B cell (primary cell): ENCODE measurements at regions of chr6 and their contacts with region 1.

Region 1: DNA sequence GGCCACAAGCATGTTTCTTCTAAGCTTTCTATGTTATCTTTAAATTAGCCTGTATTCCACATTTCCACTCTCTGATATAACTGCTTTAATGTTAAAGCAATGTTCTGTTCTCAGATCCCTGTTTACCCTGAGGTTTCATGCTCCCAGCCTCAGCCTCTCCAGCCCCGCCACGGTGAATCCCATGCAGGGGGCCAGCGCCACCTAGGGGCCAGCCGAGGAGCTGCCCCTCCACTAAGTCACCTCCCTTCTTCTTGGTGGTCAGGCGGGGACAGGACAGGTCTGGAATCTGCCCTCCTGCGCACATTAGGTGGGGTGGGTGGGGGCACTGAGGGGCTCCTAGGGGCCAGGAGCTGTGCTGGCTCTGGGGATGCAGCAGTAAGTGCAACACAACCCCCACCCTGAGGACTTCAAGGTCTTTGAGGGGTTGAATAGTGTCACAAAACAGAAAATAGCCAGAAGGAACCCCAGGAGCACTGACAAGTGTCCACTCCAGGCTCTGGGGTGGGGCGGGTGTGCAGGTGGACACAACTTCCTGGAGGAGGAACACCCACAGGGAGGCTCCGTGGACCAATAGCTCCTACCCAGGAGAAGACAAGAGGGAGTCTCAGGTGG is 61.6 kb downstream of the RAB44 start:
- DNase-seq: peak; percentile 88
- ATAC-seq: peak; percentile 55
- H3K4me3 ChIP-seq: no peak overlapping the region
- H3K4me3 Mint-ChIP-seq: peak overlapping the region; percentile 66
- H3K27ac ChIP-seq: peak overlapping the region; percentile 32 to 95
- H3K27ac Mint-ChIP-seq: peak overlapping the region; percentile 85
- H3K4me1 ChIP-seq: peaks cover 48 to 61% of the 10 kb centered on the region in 2 donors
- H3K4me1 Mint-ChIP-seq: peaks cover 56% of the 10 kb centered on the region
- H3K27me3 ChIP-seq: no peaks in the 10 kb centered on the region
- H3K27me3 Mint-ChIP-seq: no peaks in the 10 kb centered on the region
- CTCF ChIP-seq: peak; percentile 96

Region 2: DNA sequence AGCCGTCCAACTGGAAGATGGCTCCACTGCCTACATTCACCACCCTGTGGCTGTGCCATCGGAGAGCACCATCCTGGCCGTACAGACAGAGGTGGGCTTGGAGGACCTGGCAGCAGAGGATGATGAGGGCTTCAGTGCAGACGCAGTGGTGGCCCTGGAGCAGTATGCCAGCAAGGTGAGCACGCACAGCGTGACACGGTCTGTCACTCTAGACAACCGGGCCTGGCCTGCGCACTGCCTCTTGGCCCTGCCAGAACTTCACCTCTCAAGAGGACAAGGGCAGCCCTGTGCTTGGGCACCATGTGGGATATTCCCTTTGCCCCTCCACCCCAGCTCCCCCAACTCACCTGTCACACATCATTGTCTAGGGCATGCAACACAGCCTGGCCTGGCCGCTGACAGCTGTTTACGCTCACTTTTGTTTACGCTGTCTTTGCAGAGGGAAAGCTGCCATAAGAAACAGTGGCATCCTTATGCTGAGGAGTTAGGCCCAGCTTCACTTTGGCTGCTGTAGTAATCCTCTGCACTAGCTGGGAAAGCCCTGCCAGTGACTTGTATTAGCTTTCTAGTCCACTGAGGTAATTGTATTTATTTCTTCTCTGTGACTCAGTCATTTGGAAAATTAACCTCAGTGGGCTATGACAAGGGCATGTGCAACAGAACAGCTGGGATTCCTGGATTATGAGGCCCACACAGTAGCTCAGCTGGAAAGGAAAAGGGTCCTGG is 1471.4 kb before region 1 on chr6:
- CTCF ChIA-PET with region 1: no interaction called
- POLR2A ChIA-PET with region 1: no interaction called
- intact Hi-C with region 1: no loop called
- DNase-seq: no peak
- ATAC-seq: no peak
- H3K4me3 ChIP-seq: no peak overlapping the region
- H3K4me3 Mint-ChIP-seq: no peak overlapping the region
- H3K27ac ChIP-seq: no peak overlapping the region
- H3K27ac Mint-ChIP-seq: no peak overlapping the region
- H3K4me1 ChIP-seq: peaks cover 4 to 10% of the 10 kb centered on the region in 2 donors
- H3K4me1 Mint-ChIP-seq: peaks cover 9% of the 10 kb centered on the region
- H3K27me3 ChIP-seq: no peaks in the 10 kb centered on the region
- H3K27me3 Mint-ChIP-seq: no peaks in the 10 kb centered on the region
- CTCF ChIP-seq: no peak

Region 3: GRCh38 chr6:36423101-36423824 is 336.0 kb before region 1 on chr6:
- CTCF ChIA-PET with region 1: interaction called, 29 read pairs
- POLR2A ChIA-PET with region 1: no interaction called
- intact Hi-C with region 1: loop called (anchors 1 kb)
- DNase-seq: peak; percentile 98
- ATAC-seq: peak; percentile 96
- H3K4me3 ChIP-seq: peak overlapping the region; percentile 68 to 81 (median 76)
- H3K4me3 Mint-ChIP-seq: peak overlapping the region; percentile 97
- H3K27ac ChIP-seq: peak overlapping the region; percentile 57 to 68
- H3K27ac Mint-ChIP-seq: peak overlapping the region; percentile 94
- H3K4me1 ChIP-seq: peaks cover 9 to 14% of the 10 kb centered on the region in 2 donors
- H3K4me1 Mint-ChIP-seq: peaks cover 17% of the 10 kb centered on the region
- H3K27me3 ChIP-seq: no peaks in the 10 kb centered on the region
- H3K27me3 Mint-ChIP-seq: no peaks in the 10 kb centered on the region
- CTCF ChIP-seq: peak; percentile 69

Region 4: DNA sequence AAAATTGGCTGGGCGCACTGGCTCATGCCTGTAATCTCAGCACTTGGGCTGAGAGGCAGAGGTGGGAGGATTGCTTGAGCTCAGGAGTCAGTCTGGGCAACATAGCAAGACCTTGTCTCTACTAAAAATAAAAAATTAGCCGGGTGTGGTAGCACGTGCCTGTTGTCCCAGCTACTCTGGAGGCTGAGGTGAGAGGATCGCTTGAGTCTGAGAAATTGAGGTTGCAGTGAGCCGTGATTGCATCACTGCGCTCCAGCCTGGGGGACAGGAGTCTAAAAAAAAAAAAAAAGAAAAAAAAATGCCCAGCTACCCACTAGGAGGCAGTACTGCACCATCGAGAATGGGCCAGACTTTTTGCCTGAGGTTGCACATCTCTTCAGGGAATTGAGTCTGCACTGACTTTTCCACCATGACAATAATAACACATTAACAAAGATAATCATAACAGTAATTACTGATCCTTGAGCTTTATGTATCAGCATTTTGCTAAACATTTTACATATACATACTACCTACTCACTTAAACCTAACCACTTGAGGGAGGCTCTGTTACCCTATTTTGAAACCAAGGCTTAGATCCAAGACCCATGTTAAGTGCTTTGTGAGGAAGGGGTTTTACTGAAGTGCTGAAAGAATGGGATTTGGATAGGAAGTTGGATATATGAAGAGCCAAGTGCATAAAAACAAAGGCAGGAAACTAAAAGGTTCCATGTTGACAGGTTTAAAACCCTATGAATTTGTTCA is 144.1 kb before region 1 on chr6:
- CTCF ChIA-PET with region 1: interaction called, 215 read pairs
- POLR2A ChIA-PET with region 1: interaction called, 13 read pairs
- intact Hi-C with region 1: loop called (anchors 1 kb)
- DNase-seq: peak; percentile 82
- ATAC-seq: peak; percentile 81
- H3K4me3 ChIP-seq: no peak overlapping the region
- H3K4me3 Mint-ChIP-seq: no peak overlapping the region
- H3K27ac ChIP-seq: no peak overlapping the region
- H3K27ac Mint-ChIP-seq: peak overlapping the region; percentile 69
- H3K4me1 ChIP-seq: peaks cover 9 to 21% of the 10 kb centered on the region in 2 donors
- H3K4me1 Mint-ChIP-seq: peaks cover 19% of the 10 kb centered on the region
- H3K27me3 ChIP-seq: no peaks in the 10 kb centered on the region
- H3K27me3 Mint-ChIP-seq: no peaks in the 10 kb centered on the region
- CTCF ChIP-seq: peak; percentile 84

Region 5: DNA sequence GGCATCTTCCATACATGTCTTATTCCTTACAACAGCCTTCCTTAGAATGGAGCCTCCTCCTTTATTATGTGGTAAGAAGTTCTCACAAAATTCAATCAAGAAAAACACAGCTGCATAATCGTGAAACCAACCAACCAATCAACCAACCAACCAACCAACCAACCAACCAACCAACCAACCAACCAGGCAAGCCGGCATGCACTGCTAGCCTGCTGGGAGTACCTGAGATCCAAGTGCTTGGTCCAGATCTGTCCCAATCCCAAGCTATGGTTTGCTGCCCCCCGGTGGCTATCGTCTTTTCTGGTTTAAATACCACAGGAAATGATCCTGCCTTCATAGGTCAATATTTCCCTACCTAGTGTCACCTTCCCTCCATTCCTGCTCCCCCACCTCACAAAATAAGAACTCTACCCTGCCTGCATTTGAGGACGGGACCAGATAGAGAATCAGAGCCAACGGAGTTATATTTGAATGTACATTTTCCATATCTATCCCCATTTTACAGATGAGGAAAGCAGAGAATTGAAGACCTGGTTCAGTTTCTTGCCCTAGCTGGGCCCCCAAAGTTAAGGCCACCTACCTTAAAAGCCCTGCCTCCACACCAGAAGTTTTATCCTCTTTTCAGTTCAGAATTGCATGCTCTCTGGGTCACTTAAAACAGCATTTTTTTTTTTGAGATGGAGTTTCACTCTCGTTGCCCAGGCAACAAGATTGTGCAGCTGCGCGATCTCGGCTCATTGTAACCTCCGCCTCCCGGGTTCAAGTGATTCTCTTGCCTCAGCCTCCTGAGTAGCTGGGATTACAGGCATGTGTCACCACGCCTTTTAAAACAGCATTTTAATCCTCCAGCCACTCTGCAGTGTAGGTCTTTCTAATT is 34.5 kb before region 1 on chr6:
- CTCF ChIA-PET with region 1: interaction called, 21 read pairs
- POLR2A ChIA-PET with region 1: no interaction called
- intact Hi-C with region 1: no loop called
- DNase-seq: peak; percentile 63
- ATAC-seq: no peak
- H3K4me3 ChIP-seq: no peak overlapping the region
- H3K4me3 Mint-ChIP-seq: peak overlapping the region; percentile 1
- H3K27ac ChIP-seq: no peak overlapping the region
- H3K27ac Mint-ChIP-seq: peak overlapping the region; percentile 26
- H3K4me1 ChIP-seq: peaks cover 51 to 53% of the 10 kb centered on the region in 2 donors
- H3K4me1 Mint-ChIP-seq: peaks cover 58% of the 10 kb centered on the region
- H3K27me3 ChIP-seq: no peaks in the 10 kb centered on the region
- H3K27me3 Mint-ChIP-seq: no peaks in the 10 kb centered on the region
- CTCF ChIP-seq: peak; percentile 21

Region 6: DNA sequence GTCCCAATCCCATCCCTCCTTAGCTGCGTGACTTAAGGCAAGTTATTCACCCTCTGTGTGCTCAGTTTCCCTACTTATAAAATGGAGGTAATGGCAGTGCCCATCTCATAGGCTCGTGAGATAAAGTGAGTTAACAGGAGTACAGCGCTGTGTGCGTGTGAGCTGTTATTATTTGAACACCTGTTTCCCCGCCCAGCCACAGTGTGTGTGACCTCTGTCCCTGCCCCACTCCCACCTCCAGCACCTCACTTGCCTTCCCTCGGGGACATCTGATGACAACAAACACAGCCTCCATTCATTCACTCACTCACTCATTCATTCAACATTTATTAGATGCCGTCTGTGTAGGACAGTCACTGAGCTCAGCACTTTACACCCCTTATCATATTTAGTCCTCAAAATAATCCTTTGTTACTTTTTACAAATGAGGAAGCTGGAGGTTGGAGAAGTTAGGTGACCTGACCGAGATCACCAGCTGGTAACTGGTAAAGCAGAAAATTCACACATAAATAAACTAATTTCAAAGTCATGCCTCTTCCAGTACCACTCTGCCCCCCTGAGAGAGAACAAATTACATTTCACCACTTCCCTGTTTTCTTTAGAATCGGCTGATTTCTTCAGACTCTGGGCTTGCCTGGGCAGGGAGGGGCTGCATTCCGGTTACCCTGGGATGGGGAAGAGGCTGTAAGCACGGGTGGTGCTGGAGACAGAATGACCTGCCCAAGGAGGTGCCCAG is 21.4 kb after region 1 on chr6:
- CTCF ChIA-PET with region 1: interaction called, 123 read pairs
- POLR2A ChIA-PET with region 1: no interaction called
- intact Hi-C with region 1: no loop called
- DNase-seq: peak; percentile 54
- ATAC-seq: peak; percentile 42
- H3K4me3 ChIP-seq: no peak overlapping the region
- H3K4me3 Mint-ChIP-seq: peak overlapping the region; percentile 64
- H3K27ac ChIP-seq: peak overlapping the region in 1 of 2 donors; percentile 10
- H3K27ac Mint-ChIP-seq: peak overlapping the region; percentile 71
- H3K4me1 ChIP-seq: peaks cover 21 to 28% of the 10 kb centered on the region in 2 donors
- H3K4me1 Mint-ChIP-seq: peaks cover 27% of the 10 kb centered on the region
- H3K27me3 ChIP-seq: peaks cover 0 to 9% (median 0%) of the 10 kb centered on the region in 4 experiments
- H3K27me3 Mint-ChIP-seq: peaks cover 17% of the 10 kb centered on the region
- CTCF ChIP-seq: no peak

Region 7: DNA sequence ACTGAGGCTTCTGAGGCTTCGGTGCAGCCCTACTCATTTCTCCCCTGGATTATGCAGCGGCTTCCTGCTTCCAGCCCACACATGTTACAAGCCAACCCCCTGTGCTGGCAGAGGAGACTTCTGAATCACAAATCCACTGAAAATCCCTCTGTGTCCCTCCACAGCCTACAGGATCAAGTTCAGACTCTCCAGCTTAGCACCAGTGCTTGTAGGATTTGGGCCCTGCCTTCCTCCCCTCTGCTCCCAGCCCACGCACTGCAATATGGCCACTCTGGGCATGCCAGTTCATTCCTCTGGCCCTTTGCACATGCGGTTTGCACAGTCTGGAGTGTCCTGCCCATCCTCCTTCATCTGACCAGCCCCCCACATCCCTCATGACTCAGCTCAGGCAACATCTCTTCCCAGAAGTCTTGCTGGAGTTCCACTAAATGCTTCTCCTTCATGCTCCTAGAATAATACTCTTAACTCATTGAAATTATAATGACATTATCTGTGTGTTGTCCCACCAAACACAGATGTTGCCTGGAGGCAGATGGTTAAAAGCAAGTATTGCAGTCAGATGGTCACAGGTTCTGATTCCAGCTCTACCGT is 954.4 kb after region 1 on chr6:
- CTCF ChIA-PET with region 1: no interaction called
- POLR2A ChIA-PET with region 1: no interaction called
- intact Hi-C with region 1: no loop called
- DNase-seq: no peak
- ATAC-seq: no peak
- H3K4me3 ChIP-seq: no peak overlapping the region
- H3K4me3 Mint-ChIP-seq: no peak overlapping the region
- H3K27ac ChIP-seq: no peak overlapping the region
- H3K27ac Mint-ChIP-seq: no peak overlapping the region
- H3K4me1 ChIP-seq: peaks cover 0 to 4% of the 10 kb centered on the region in 2 donors
- H3K4me1 Mint-ChIP-seq: peaks cover 4% of the 10 kb centered on the region
- H3K27me3 ChIP-seq: peaks cover 0 to 5% (median 0%) of the 10 kb centered on the region in 4 experiments
- H3K27me3 Mint-ChIP-seq: peaks cover 11% of the 10 kb centered on the region
- CTCF ChIP-seq: no peak